BJ (cell line): ENCODE measurements at regions of chr10 and their contacts with region 1.

Region 1: GRCh38 chr10:70528726-70529362 is 50.3 kb downstream of the PALD1 start:
- DNase-seq: no peak
- H3K4me3 ChIP-seq: no peak overlapping the region
- H3K27me3 ChIP-seq: peaks cover 2% of the 10 kb centered on the region
- CTCF ChIP-seq: no peak

Region 2: GRCh38 chr10:70513848-70514309 is 15.0 kb before region 1 on chr10:
- CTCF ChIA-PET with region 1: no interaction called
- POLR2A ChIA-PET with region 1: interaction called, 10 read pairs
- DNase-seq: no peak
- H3K4me3 ChIP-seq: no peak overlapping the region
- H3K27me3 ChIP-seq: peaks cover 2% of the 10 kb centered on the region; the same call in 1 of the 2 replicates
- CTCF ChIP-seq: no peak